Activated naive CD4-positive, alpha-beta T cell treated with anti-CD3 and anti-CD28 coated beads for 36 hours (primary cell): ENCODE measurements at regions of chr17 and their contacts with region 1.

Region 1: DNA sequence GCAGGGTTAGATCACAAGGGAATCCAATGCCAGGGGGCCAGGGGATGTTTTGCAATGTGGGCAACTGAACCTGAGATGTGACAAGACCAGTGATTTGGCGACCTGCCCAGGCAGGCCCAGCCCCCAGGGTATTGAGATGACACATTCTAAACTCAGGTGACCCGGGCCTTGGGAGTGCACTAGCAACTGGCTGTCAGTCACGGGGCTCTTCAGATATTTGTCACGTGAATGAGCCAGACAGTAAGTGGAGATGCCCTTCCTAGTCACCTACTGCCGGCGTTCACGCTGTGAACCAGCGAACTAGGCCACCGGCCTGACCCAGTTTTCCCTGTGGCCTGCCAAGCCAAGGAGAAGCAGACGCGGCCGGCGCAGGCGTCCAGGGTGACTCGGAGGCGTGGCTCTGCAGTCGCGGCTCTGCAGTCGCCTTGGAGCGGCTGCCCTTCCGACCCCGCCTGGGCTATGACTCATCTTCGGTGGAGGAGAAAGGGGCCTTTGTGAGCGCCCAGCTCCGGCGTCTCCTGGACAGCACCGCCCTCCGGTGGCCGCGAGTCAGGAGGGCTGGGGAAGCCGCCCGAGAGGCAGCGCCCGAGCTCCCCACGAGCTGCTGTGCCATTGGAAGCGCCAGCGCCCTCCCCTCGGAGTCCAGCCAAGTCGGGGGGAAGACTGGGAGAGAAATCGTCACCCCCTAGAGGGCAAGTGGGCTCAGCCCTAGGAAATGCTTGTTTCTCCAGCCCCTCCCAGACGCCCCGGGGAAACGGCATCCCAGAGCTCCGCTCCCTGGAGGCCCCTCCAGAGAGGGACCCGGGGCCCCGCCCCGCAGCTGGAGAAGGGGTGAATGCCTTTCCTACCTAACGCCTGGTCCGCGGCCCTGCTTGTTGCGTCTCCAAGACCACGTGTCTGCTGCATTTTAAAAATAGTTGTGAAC is 38.8 kb downstream of the WSB1 start:
- DNase-seq: peak; percentile 97
- H3K4me3 Mint-ChIP-seq: peak overlapping the region; percentile 75
- H3K27ac Mint-ChIP-seq: peak overlapping the region; percentile 74
- H3K4me1 Mint-ChIP-seq: peaks cover 20% of the 10 kb centered on the region
- H3K27me3 Mint-ChIP-seq: peaks cover 3% of the 10 kb centered on the region

Region 2: GRCh38 chr17:27199948-27200347 is 132.8 kb before region 1 on chr17:
- CTCF ChIA-PET with region 1: interaction called, 4 read pairs
- intact Hi-C with region 1: loop called (anchors 1 kb)
- DNase-seq: no peak
- H3K4me3 Mint-ChIP-seq: no peak overlapping the region
- H3K27ac Mint-ChIP-seq: no peak overlapping the region
- H3K4me1 Mint-ChIP-seq: no peaks in the 10 kb centered on the region
- H3K27me3 Mint-ChIP-seq: peaks cover 4% of the 10 kb centered on the region

Region 3: GRCh38 chr17:27245230-27245696 is 87.5 kb before region 1 on chr17:
- CTCF ChIA-PET with region 1: interaction called, 12 read pairs
- intact Hi-C with region 1: loop called (anchors 1 kb)
- DNase-seq: peak; percentile 73
- H3K4me3 Mint-ChIP-seq: no peak overlapping the region
- H3K27ac Mint-ChIP-seq: no peak overlapping the region
- H3K4me1 Mint-ChIP-seq: no peaks in the 10 kb centered on the region
- H3K27me3 Mint-ChIP-seq: peaks cover 3% of the 10 kb centered on the region

Region 4: GRCh38 chr17:27345141-27345904 is 12.6 kb after region 1 on chr17:
- CTCF ChIA-PET with region 1: interaction called, 19 read pairs
- intact Hi-C with region 1: loop called (anchors 2 kb)
- DNase-seq: no peak
- H3K4me3 Mint-ChIP-seq: no peak overlapping the region
- H3K27ac Mint-ChIP-seq: no peak overlapping the region
- H3K4me1 Mint-ChIP-seq: peaks cover 8% of the 10 kb centered on the region
- H3K27me3 Mint-ChIP-seq: no peaks in the 10 kb centered on the region

Region 5: DNA sequence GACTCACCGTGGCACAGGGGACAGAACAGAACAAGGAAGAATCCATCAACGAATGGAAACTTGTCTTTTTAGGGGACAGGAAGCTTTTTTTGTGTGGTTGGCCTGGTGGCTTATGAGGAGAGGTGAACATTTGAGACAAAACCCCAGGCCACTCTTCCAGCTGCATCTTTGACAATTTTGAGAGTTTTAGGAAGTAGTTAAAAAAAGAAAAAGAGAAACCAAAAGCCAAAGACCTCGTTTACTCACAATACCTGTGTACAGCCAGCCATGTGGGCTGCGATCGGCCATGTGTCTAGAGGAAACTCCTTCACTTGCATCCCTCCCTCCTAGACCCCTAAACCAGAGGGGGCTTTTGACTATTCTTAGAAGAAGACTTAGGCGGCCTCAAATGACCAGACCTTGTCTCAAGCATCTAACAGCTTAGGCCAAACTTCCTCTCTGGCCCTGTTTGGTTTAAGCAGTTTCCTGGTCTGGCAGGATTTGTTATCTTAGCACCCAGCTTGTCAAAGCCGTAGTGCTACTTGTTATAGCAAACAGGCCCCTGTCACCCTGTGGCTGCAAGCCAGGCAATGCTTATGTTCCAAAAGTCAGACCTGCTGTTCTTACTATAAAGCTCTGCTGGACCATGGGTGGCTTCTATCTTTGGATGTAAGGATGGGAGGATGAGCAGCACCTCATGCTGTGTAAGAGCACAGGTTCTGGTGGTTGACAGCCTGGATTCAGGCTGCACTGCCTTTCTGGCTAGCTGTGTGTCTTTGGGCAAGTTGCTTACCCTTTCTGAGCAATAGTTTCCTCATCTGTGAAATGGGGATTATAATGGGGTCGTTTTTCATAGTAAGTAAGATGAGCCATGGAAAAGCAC is 141.2 kb after region 1 on chr17:
- CTCF ChIA-PET with region 1: interaction called, 5 read pairs
- intact Hi-C with region 1: loop called (anchors 1 kb)
- DNase-seq: peak; percentile 94
- H3K4me3 Mint-ChIP-seq: peak overlapping the region; percentile 45
- H3K27ac Mint-ChIP-seq: peak overlapping the region; percentile 97
- H3K4me1 Mint-ChIP-seq: peaks cover 93% of the 10 kb centered on the region
- H3K27me3 Mint-ChIP-seq: no peaks in the 10 kb centered on the region